ENCODE measurements at regions of chr9 and their contacts with region 1.

Region 1: DNA sequence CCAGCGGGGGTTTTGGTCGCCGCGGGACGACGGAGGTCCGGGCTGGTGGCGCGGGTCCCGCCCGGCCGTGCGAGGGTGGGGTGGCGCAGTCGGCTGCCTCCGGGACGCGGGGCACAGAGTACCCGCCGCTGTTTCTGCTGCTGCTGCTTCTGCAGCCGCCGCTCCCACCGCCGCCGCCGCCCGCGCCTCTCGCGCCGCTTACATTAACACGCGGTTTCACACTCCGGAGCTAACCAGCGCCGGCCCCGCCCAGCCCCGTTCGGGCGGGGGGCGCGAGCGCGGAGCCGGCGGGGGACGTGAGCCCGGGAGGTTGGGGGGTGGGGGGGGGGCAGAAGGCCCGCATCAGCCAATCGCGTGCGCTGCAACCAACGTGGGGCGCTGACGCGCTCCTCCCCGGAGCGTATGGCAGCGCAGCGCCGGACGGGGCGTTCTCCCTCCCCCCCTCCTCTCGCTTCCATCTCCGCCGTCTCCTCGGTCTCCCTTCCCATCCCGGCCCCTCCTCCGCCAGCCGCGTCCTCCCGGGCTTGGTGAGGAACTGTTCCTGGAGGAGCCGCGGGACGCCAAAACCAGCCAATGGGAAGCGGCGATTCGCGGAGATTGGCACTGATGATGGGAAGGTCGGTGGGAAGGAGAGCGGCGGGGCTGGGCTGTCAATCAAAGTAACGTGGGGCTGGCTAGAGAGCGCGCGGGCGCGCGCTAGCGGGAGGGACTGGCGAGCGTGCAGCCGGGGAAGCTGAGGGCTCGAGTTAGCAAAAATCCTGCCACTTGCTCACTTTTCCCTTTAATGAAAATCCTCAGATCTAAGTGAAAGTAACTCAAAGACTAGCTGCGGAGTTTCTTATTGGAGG is at the start of gene TLE1:
- DNase-seq: peak; percentile 100
- ATAC-seq: peak; percentile 98 to 99
- H3K4me3 ChIP-seq: peak within 1 kb of the TSS; percentile 71
- H3K27ac ChIP-seq: peak within 1 kb of the TSS; percentile 40
- H3K4me1 ChIP-seq: peaks cover 2% of the 10 kb centered on the region
- H3K27me3 ChIP-seq: no peaks in the 10 kb centered on the region
- total RNA-seq, gene TLE1: 14.9 to 18.4 (median 16.0) TPM

Region 2: GRCh38 chr9:81529556-81530195 is 159.9 kb before region 1 on chr9:
- intact Hi-C with region 1: loop called in 1 of 4 experiments (anchors 10 kb)
- DNase-seq: peak in 2 of 3 donors; percentile 34 to 65
- ATAC-seq: peak; percentile 85 to 94
- H3K4me3 ChIP-seq: no peak overlapping the region
- H3K27ac ChIP-seq: no peak overlapping the region
- H3K4me1 ChIP-seq: no peaks in the 10 kb centered on the region
- H3K27me3 ChIP-seq: no peaks in the 10 kb centered on the region

Region 3: GRCh38 chr9:81609782-81610739 is 79.5 kb before region 1 on chr9:
- intact Hi-C with region 1: loop called in 2 of 4 experiments (anchors 5 to 10 kb)
- DNase-seq: no peak
- ATAC-seq: no peak
- H3K4me3 ChIP-seq: no peak overlapping the region
- H3K27ac ChIP-seq: no peak overlapping the region
- H3K4me1 ChIP-seq: peaks cover 4% of the 10 kb centered on the region
- H3K27me3 ChIP-seq: no peaks in the 10 kb centered on the region

Region 4: GRCh38 chr9:81814401-81815166 is 125.0 kb after region 1 on chr9:
- intact Hi-C with region 1: loop called in 1 of 4 experiments (anchors 10 kb)
- DNase-seq: no peak
- ATAC-seq: peak in 1 of 2 donors; percentile 29
- H3K4me3 ChIP-seq: no peak overlapping the region
- H3K27ac ChIP-seq: no peak overlapping the region
- H3K4me1 ChIP-seq: peaks cover 1% of the 10 kb centered on the region
- H3K27me3 ChIP-seq: no peaks in the 10 kb centered on the region

Region 5: GRCh38 chr9:81826517-81826906 is 136.9 kb after region 1 on chr9:
- intact Hi-C with region 1: loop called in 1 of 4 experiments (anchors 10 kb)
- DNase-seq: peak; percentile 82 to 94 (median 92)
- ATAC-seq: peak; percentile 93 to 94
- H3K4me3 ChIP-seq: no peak overlapping the region
- H3K27ac ChIP-seq: no peak overlapping the region
- H3K4me1 ChIP-seq: no peaks in the 10 kb centered on the region
- H3K27me3 ChIP-seq: no peaks in the 10 kb centered on the region

Region 6: DNA sequence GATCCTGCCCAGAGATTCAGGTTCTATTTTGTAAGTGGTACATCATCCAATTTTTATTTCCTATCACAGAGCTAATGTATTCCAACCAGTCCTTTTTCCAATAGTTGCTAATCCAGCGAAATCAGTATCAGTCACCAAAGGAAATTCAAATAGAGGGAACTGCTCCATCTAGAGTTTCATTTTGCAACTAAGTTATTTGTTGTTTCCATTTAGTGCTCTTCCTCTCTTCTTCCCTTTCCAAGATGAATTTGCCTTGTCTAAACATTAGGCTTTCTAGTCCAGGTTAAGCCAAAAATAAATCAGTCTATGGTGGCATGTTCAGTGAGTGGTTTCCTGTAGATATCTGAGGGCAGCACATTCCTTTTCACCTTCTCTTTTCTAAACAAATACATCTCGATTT is 158.9 kb after region 1 on chr9:
- intact Hi-C with region 1: loop called in 1 of 4 experiments (anchors 5 kb)
- DNase-seq: no peak
- ATAC-seq: peak in 1 of 2 donors; percentile 28
- H3K4me3 ChIP-seq: no peak overlapping the region
- H3K27ac ChIP-seq: no peak overlapping the region
- H3K4me1 ChIP-seq: peaks cover 5% of the 10 kb centered on the region
- H3K27me3 ChIP-seq: no peaks in the 10 kb centered on the region